Common myeloid progenitor, CD34-positive (primary cell): ENCODE measurements at regions of chr11 and their contacts with region 1.

Region 1: GRCh38 chr11:68118706-68119448 is 2.3 kb downstream of the CHKA start:
- DNase-seq: peak in 2 of 3 donors; percentile 79 to 84
- H3K4me3 ChIP-seq: peak overlapping the region in 5 of 7 experiments; percentile 8 to 89 (median 42)
- H3K27ac ChIP-seq: peak overlapping the region in 1 of 2 experiments; percentile 18
- H3K4me1 ChIP-seq: peaks cover 22 to 54% (median 43%) of the 10 kb centered on the region in 4 experiments
- H3K27me3 ChIP-seq: no peaks in the 10 kb centered on the region

Region 2: DNA sequence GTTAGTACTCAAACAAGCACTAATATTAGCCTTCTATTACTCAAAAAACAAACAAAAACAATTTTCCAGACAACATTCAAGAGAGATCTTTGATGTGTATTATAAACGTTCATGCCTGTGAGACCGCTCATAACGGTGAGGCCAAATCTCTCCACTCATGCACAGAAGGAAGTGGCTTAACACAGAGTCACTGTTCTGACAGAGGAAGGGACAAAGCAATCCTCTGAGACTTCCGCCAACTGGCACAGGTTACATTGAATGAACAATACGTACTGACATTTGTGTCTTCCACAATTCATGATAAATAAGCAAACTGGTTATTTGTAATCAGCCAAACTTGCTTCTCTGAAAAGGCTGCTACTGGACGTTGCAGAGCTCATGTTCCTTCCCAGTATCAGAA is 28.2 kb before region 1 on chr11:
- CTCF ChIA-PET with region 1: interaction called, 13 read pairs
- POLR2A ChIA-PET with region 1: no interaction called
- DNase-seq: peak; percentile 58 to 84 (median 76)
- H3K4me3 ChIP-seq: peak overlapping the region in 4 of 7 experiments; percentile 34 to 44 (median 40)
- H3K27ac ChIP-seq: peak overlapping the region; percentile 37 to 82
- H3K4me1 ChIP-seq: peaks cover 6 to 26% (median 18%) of the 10 kb centered on the region in 4 experiments
- H3K27me3 ChIP-seq: no peaks in the 10 kb centered on the region

Region 3: GRCh38 chr11:68106165-68106957 is 12.5 kb before region 1 on chr11:
- CTCF ChIA-PET with region 1: interaction called, 10 read pairs
- POLR2A ChIA-PET with region 1: no interaction called
- DNase-seq: no peak
- H3K4me3 ChIP-seq: no peak overlapping the region
- H3K27ac ChIP-seq: no peak overlapping the region
- H3K4me1 ChIP-seq: peaks cover 0 to 9% (median 2%) of the 10 kb centered on the region in 4 experiments
- H3K27me3 ChIP-seq: no peaks in the 10 kb centered on the region

Region 4: GRCh38 chr11:68135161-68135560 is 16.3 kb after region 1 on chr11:
- CTCF ChIA-PET with region 1: no interaction called
- POLR2A ChIA-PET with region 1: no interaction called
- DNase-seq: no peak
- H3K4me3 ChIP-seq: no peak overlapping the region
- H3K27ac ChIP-seq: no peak overlapping the region
- H3K4me1 ChIP-seq: peaks cover 0 to 6% (median 5%) of the 10 kb centered on the region in 4 experiments
- H3K27me3 ChIP-seq: no peaks in the 10 kb centered on the region